Activated naive CD4-positive, alpha-beta T cell treated with anti-CD3 and anti-CD28 coated beads for 36 hours (primary cell): ENCODE measurements at regions of chr21 and their contacts with region 1.

Region 1: DNA sequence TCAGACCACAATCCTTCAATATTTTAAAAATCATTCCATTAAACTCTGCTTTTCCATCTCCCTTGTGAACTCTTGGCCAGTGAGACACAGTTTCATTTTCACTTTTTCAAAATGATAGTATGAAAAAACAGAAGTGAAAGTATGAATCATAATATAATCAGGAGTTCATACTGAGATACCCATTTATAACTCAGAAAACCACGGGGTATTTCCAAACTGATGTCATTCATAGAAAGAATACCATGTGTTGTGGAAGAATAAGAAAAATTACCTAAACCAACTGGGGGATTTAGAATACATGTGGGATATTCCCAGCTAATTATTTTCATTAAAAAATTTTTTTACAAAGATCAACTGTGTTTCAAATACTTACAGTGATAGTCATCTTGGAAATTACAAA is 149.9 kb downstream of the MRPL39 start:
- DNase-seq: no peak
- H3K4me3 Mint-ChIP-seq: peak overlapping the region; percentile 48
- H3K27ac Mint-ChIP-seq: peak overlapping the region; percentile 84
- H3K4me1 Mint-ChIP-seq: peaks cover 74% of the 10 kb centered on the region
- H3K27me3 Mint-ChIP-seq: no peaks in the 10 kb centered on the region

Region 2: GRCh38 chr21:25176637-25177412 is 280.6 kb before region 1 on chr21:
- CTCF ChIA-PET with region 1: no interaction called
- intact Hi-C with region 1: no loop called
- DNase-seq: no peak
- H3K4me3 Mint-ChIP-seq: no peak overlapping the region
- H3K27ac Mint-ChIP-seq: no peak overlapping the region
- H3K4me1 Mint-ChIP-seq: no peaks in the 10 kb centered on the region
- H3K27me3 Mint-ChIP-seq: no peaks in the 10 kb centered on the region

Region 3: GRCh38 chr21:25428537-25428936 is 28.9 kb before region 1 on chr21:
- CTCF ChIA-PET with region 1: interaction called, 4 read pairs
- intact Hi-C with region 1: loop called (anchors 1 kb)
- DNase-seq: no peak
- H3K4me3 Mint-ChIP-seq: peak overlapping the region; percentile 44
- H3K27ac Mint-ChIP-seq: peak overlapping the region; percentile 64
- H3K4me1 Mint-ChIP-seq: peaks cover 48% of the 10 kb centered on the region
- H3K27me3 Mint-ChIP-seq: peaks cover 2% of the 10 kb centered on the region

Region 4: GRCh38 chr21:25507522-25507921 is 50.1 kb after region 1 on chr21:
- CTCF ChIA-PET with region 1: interaction called, 4 read pairs
- intact Hi-C with region 1: loop called (anchors 1 kb)
- DNase-seq: peak; percentile 55
- H3K4me3 Mint-ChIP-seq: no peak overlapping the region
- H3K27ac Mint-ChIP-seq: peak overlapping the region; percentile 70
- H3K4me1 Mint-ChIP-seq: peaks cover 75% of the 10 kb centered on the region
- H3K27me3 Mint-ChIP-seq: no peaks in the 10 kb centered on the region

Region 5: GRCh38 chr21:25561668-25562641 is 104.5 kb after region 1 on chr21:
- CTCF ChIA-PET with region 1: interaction called, 6 read pairs
- intact Hi-C with region 1: loop called (anchors 1 kb)
- DNase-seq: peak; percentile 81
- H3K4me3 Mint-ChIP-seq: peak overlapping the region; percentile 91
- H3K27ac Mint-ChIP-seq: peak overlapping the region; percentile 96
- H3K4me1 Mint-ChIP-seq: peaks cover 45% of the 10 kb centered on the region
- H3K27me3 Mint-ChIP-seq: no peaks in the 10 kb centered on the region